Activated B cell treated with CpG ODN at 0.5 μM for 24 hours (primary cell): ENCODE measurements at regions of chr5 and their contacts with region 1.

Region 1: DNA sequence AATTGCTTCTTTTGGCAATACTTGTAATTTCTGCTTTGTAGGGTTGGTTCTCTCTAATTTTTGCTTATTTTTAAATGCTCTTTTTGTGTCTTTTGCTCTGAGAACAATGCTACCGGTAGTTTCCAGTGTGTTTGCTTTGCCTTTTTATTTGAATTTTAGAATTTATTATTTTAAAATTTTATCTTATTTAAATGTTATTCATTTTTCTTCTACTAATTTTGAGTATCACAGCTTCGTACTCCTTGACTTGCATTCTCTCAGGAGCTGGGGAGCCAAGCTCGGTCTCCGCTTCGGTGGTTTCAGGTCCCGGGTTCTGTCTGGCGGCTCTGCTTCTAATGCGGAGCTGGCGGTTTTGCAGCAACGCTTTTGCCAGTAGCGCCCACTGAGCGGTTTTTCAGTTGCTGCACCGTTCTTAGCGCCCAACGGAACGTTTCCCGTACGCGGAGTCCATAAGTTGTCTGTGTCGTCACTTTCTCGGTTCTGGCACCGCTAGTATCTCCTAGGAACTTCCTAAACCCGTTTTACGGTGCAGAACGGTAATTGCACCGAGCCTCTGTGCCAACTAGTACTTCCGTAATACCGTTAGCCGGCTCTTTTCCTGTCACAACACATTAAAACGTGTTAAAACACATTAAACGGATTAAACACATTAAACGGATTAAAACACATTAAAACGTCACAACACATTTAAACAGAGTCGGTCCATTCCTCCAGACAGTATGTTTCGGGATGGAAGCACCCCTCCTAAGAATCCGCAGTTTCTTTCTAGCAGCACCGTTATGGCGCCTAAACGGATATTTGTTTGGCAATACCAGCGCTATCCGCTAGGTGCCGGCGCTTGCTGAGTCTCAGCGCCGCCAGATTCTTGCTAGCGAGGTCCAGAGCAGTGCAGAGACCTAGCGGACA is 45.6 kb downstream of the ANXA2R start:
- DNase-seq: peak; percentile 72
- ATAC-seq: peak; percentile 66
- H3K4me3 Mint-ChIP-seq: peak overlapping the region; percentile 99
- H3K27ac Mint-ChIP-seq: peak overlapping the region; percentile 100
- H3K4me1 Mint-ChIP-seq: peaks cover 34% of the 10 kb centered on the region
- H3K27me3 Mint-ChIP-seq: peaks cover under 1% of the 10 kb centered on the region
- CTCF ChIP-seq: peak; percentile 89

Region 2: GRCh38 chr5:43008369-43009153 is 14.1 kb after region 1 on chr5:
- CTCF ChIA-PET with region 1: interaction called, 75 read pairs
- POLR2A ChIA-PET with region 1: interaction called, 327 read pairs
- intact Hi-C with region 1: loop called (anchors 1 kb)
- DNase-seq: peak; percentile 77
- ATAC-seq: peak; percentile 53
- H3K4me3 Mint-ChIP-seq: peak overlapping the region; percentile 89
- H3K27ac Mint-ChIP-seq: peak overlapping the region; percentile 98
- H3K4me1 Mint-ChIP-seq: peaks cover 31% of the 10 kb centered on the region
- H3K27me3 Mint-ChIP-seq: no peaks in the 10 kb centered on the region
- CTCF ChIP-seq: no peak

Region 3: GRCh38 chr5:43019614-43020293 is 25.3 kb after region 1 on chr5:
- CTCF ChIA-PET with region 1: interaction called, 86 read pairs
- POLR2A ChIA-PET with region 1: interaction called, 400 read pairs
- intact Hi-C with region 1: loop called (anchors 1 kb)
- DNase-seq: peak; percentile 61
- ATAC-seq: peak; percentile 64
- H3K4me3 Mint-ChIP-seq: peak overlapping the region; percentile 97
- H3K27ac Mint-ChIP-seq: peak overlapping the region; percentile 100
- H3K4me1 Mint-ChIP-seq: peaks cover 39% of the 10 kb centered on the region
- H3K27me3 Mint-ChIP-seq: no peaks in the 10 kb centered on the region
- CTCF ChIP-seq: no peak

Region 4: GRCh38 chr5:43396762-43397304 is 402.3 kb after region 1 on chr5:
- CTCF ChIA-PET with region 1: no interaction called
- POLR2A ChIA-PET with region 1: interaction called, 3 read pairs
- intact Hi-C with region 1: loop called (anchors 2 kb)
- DNase-seq: peak; percentile 67
- ATAC-seq: peak; percentile 100
- H3K4me3 Mint-ChIP-seq: peak overlapping the region; percentile 99
- H3K27ac Mint-ChIP-seq: peak overlapping the region; percentile 96
- H3K4me1 Mint-ChIP-seq: peaks cover 20% of the 10 kb centered on the region
- H3K27me3 Mint-ChIP-seq: no peaks in the 10 kb centered on the region
- CTCF ChIP-seq: no peak